HEK293 (cell line): ENCODE measurements at regions of chr17 and their contacts with region 1.

Region 1: GRCh38 chr17:55652114-55652823 is 70.4 kb downstream of the TMEM100 start:
- H3K4me3 ChIP-seq: no peak overlapping the region
- H3K27ac ChIP-seq: no peak overlapping the region
- H3K4me1 ChIP-seq: no peaks in the 10 kb centered on the region
- CTCF ChIP-seq: no peak

Region 2: DNA sequence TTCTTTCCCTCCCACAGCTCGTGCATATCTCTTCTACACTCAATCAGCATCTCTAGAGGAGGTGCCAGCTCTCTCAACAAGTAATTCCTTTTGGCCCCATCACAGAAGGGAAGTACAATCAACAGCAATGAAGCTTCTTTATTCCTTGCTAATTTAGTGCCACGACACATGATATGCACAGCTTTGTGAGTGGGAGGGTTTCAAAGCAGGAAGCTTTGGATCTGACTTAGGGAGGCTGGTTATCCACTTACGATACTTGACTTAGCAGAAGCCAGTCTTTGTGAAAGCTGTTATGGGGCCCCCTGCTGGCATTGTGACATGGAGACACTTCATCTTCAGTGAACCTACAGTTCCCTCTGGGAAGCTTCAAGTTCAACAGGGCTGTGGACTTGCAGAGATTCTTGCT is 10.6 kb before region 1 on chr17:
- CTCF ChIA-PET with region 1: interaction called, 15 read pairs
- POLR2A ChIA-PET with region 1: no interaction called
- H3K4me3 ChIP-seq: no peak overlapping the region
- H3K27ac ChIP-seq: no peak overlapping the region
- H3K4me1 ChIP-seq: peaks cover 5% of the 10 kb centered on the region; the same call in 1 of the 2 replicates
- CTCF ChIP-seq: no peak

Region 3: GRCh38 chr17:55673743-55674506 is 21.7 kb after region 1 on chr17:
- CTCF ChIA-PET with region 1: no interaction called
- POLR2A ChIA-PET with region 1: no interaction called
- H3K4me3 ChIP-seq: no peak overlapping the region
- H3K27ac ChIP-seq: no peak overlapping the region
- H3K4me1 ChIP-seq: no peaks in the 10 kb centered on the region
- CTCF ChIP-seq: no peak

Region 4: GRCh38 chr17:55763851-55764250 is 111.6 kb after region 1 on chr17:
- CTCF ChIA-PET with region 1: no interaction called
- POLR2A ChIA-PET with region 1: no interaction called
- H3K4me3 ChIP-seq: no peak overlapping the region
- H3K27ac ChIP-seq: no peak overlapping the region
- H3K4me1 ChIP-seq: no peaks in the 10 kb centered on the region
- CTCF ChIP-seq: no peak